A549 (cell line): ENCODE measurements at regions of chr2 and their contacts with region 1.

Region 1: DNA sequence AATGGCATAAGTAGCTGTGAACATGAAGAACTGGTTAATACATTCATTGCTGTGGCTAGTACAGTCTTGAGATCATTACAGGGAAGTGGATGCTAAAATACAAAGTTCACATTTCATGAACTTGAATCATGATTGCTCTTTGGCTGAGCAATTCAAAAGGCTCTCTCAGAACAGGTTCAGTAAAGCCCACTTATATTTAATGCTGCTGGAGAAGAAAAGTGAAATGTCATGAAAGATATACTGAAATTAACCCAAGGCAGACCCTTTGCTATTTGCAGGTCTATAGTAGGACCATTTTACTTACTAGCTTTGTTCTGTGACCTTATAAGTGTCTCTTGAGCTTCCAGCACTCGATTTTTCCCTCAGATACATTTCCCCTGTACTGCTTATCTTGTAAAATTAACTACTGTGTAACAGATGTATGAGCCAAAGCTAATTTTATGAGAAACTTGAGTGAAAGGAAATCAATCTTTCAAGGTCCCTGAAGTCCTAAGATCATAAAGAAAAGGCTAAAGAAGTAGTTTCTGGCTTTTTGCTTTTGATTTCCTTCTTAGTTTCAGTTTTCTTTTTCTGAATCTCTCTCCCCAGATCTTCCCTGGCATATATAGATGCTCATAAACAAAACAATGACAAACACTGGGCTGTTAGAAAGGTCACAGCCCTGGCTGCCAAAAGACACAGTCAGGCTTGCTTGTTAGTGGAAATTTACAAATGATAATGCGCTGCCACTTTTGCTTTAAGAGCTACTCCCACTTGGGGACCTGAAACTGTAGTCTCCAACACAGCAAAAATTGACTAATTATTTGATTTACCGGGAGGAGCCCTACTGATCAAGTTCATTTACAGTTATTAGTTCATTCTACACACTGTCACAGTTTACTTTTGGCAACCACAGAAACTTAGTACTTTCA is 132.7 kb upstream of the XPO1 start:
- DNase-seq: peak; percentile 42 to 72
- ATAC-seq: peak; percentile 85
- H3K4me3 ChIP-seq: peak overlapping the region; percentile 30
- H3K27ac ChIP-seq: peak overlapping the region; percentile 80 to 81
- H3K4me1 ChIP-seq: peaks cover 23% of the 10 kb centered on the region
- CTCF ChIP-seq: no peak
- EP300 ChIP-seq: no peak
- POLR2A ChIP-seq: no peak
- RAD21 ChIP-seq: no peak

Region 2: DNA sequence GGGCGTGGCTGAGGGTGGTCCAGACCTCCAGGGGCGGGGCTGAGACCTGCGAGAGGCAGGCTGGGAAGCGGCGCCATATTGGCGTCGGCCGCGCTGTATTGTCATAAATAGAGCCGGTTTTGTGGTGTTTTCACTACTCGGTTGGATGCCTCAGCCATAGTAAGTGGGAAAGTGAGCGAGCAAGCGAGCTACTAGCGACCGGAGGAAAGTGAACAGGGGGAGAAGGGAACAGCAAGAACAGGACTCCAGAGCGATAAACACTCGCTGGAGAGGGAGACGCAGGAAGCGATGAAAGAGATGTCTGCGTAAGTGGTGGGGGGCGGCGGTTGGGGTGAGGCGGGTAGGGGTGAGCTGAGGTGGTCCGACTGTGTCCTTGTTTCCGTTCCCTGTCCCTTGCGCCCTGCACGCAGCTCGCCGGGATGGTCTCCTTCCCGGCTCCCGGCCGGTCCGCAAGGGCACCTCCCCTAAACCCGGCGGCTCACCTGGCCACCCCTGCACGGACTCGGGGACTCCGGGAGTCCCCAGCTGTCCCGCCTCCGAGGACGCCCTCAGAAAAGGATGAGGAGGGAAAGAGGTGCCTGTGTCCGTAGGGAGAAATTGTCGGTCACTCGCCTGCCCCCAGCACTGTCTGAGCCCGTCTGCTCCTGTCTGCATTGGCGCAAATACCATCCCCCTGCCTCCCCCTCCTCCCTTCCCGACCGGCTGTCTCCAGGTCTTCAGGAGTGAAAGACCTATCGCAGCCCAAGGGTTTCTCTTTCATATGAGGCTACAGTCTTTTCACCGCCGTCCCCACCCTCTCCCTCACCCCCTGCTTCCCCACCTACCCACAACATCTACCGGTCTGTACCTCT is 914.4 kb before region 1 on chr2 and contains the start of gene PAPOLG:
- CTCF ChIA-PET with region 1: no interaction called
- POLR2A ChIA-PET with region 1: interaction called, 10 read pairs
- DNase-seq: peak; percentile 68 to 92
- ATAC-seq: peak; percentile 98 to 100
- H3K4me3 ChIP-seq: peak within 1 kb of the TSS; percentile 88
- H3K27ac ChIP-seq: peak within 1 kb of the TSS; percentile 89 to 90
- H3K4me1 ChIP-seq: peaks cover 12% of the 10 kb centered on the region; the same call in 2 of the 3 replicates
- CTCF ChIP-seq: no peak
- EP300 ChIP-seq: no peak
- POLR2A ChIP-seq: peak; percentile 95
- RAD21 ChIP-seq: no peak
- polyA plus RNA-seq, gene PAPOLG: 20.9 and 21.8 TPM in 2 replicates

Region 3: DNA sequence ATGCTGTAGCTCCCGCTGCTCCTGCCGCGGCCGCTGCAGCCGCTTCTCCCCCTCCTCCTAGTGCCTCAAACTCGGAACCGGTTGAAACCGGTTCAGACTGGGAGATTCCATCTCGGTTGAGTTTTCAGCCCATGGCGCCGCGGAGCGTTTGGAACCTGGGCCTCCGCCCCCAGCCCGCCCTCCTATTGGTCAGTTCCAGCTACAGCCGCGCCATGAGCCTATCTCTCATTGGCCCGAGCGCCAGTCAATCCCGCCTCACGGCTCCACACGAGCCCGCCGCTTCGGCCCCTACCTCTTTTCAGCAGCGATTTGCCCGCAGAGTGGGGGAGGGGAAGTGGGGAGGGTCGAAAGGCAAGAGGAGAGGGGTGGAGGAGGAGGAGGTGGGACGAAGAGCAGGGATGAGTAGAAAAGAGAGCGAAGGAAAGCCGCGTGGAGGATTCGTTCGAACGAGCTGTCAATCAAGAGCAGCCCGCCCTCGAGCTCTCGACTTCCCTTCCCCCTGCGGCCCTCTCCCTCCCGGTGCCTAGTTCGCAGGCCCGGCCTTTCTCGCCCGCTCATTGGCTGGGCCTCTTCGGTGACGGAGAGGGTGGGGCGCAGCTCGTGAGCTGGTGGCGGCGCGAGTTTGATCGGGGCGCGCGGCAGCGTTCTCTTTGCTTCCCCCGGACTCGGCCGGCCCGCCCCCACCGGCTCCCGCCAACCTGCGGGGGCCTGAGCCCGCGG is 132.5 kb before region 1 on chr2 and contains the start of gene XPO1:
- CTCF ChIA-PET with region 1: no interaction called
- POLR2A ChIA-PET with region 1: interaction called, 11 read pairs
- DNase-seq: peak; percentile 97 to 100
- ATAC-seq: peak; percentile 82 to 92
- H3K4me3 ChIP-seq: peak within 1 kb of the TSS; percentile 83
- H3K27ac ChIP-seq: peak within 1 kb of the TSS; percentile 97 to 98
- H3K4me1 ChIP-seq: peaks cover 30% of the 10 kb centered on the region
- CTCF ChIP-seq: no peak
- EP300 ChIP-seq: peak in 1 of 2 experiments; percentile 13; a peak in 1 of 5 replicates
- POLR2A ChIP-seq: peak; percentile 86
- RAD21 ChIP-seq: no peak
- polyA plus RNA-seq, gene XPO1: 173 and 216 TPM in 2 replicates

Region 4: GRCh38 chr2:61658841-61659780 is 11.7 kb before region 1 on chr2:
- CTCF ChIA-PET with region 1: interaction called, 24 read pairs
- POLR2A ChIA-PET with region 1: interaction called, 3 read pairs
- DNase-seq: peak; percentile 72 to 81
- ATAC-seq: peak; percentile 90 to 96
- H3K4me3 ChIP-seq: peak overlapping the region; percentile 4
- H3K27ac ChIP-seq: peak overlapping the region; percentile 12 to 22; a peak in 4 of 6 replicates
- H3K4me1 ChIP-seq: peaks cover 11% of the 10 kb centered on the region
- CTCF ChIP-seq: peak; percentile 93
- EP300 ChIP-seq: no peak
- POLR2A ChIP-seq: no peak
- RAD21 ChIP-seq: peak; percentile 92

Region 5: DNA sequence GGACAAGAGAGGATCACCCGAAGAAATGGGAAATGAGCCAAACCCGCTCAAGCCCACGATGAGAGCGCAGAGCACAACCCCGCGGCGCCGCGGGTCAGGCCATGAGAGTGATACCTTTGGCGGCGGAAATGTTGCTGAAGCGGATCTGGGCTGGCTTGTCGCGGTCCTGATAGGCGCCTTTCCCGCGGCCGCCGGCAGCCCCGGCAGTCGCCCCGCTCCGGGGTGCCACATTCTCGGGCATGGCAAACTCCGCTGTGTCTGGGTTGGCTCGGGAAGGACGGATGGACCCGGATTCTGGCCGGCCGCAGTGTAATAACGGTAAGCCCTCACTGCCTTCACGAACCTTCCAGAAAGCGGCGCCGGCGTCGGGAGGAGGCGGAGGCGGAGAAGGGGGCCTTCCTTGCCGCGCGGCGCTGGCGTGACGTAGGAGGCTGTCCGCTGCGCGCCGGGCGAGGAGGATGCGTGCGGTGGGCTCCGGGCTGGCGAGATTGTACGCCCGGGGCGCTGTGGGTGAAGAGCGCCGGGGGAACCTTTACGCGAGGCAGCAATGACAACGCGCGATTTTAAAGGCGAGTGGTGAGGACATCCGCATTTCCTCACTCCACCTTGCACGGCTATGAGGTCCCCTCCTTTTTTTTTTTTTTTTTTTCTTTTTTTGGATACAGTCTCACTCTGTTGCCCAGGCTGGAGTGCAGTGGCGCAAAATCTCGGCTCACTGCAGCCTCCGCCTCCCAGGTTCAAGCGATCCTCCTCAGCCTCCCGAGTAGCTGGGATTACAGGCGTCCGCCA is 217.6 kb after region 1 on chr2 and contains the start of gene CCT4:
- CTCF ChIA-PET with region 1: no interaction called
- POLR2A ChIA-PET with region 1: no interaction called
- DNase-seq: peak; percentile 77 to 93
- ATAC-seq: peak; percentile 85 to 92
- H3K4me3 ChIP-seq: peak within 1 kb of the TSS; percentile 88
- H3K27ac ChIP-seq: peak within 1 kb of the TSS; percentile 89 to 93
- H3K4me1 ChIP-seq: peaks cover 27% of the 10 kb centered on the region
- CTCF ChIP-seq: no peak
- EP300 ChIP-seq: no peak
- POLR2A ChIP-seq: peak; percentile 90
- RAD21 ChIP-seq: no peak
- polyA plus RNA-seq, gene CCT4: 307 and 352 TPM in 2 replicates